ENCODE measurements at regions of chr3 and their contacts with region 1.

Region 1: DNA sequence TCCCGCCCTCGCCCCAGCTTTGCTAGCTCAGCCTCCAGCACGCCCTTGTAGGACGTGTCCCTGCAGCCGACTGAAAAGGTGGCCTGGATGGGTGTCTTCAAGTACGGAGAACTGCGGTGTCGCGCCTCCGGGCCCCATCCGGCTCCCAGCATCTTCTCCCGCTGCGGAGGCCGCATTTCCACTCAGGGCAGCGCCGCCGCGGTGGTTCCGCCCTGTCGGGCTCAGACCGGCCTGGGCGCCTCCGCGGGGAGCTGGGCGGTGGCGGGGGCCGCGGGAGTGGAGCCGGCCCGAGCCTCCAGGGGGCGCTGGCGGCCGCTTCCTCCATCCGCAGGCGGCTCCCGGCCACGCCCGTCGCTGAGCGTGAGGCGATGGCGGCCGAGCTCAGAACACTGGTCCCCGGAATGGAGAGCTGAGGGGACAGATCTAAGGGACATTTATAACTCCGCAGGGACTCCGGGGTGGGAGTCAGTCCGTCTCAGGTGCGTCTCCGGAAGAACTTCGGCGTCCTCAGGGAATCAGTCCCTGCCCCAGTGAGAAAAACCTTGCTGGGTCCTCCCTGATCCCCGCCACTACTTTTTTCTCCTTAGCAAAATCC is 13.6 kb upstream of the SMCO1 start:
- DNase-seq: peak; percentile 90
- H3K4me3 Mint-ChIP-seq: peak overlapping the region; percentile 73
- H3K27ac Mint-ChIP-seq: peak overlapping the region; percentile 85
- H3K4me1 Mint-ChIP-seq: peaks cover 22% of the 10 kb centered on the region
- H3K27me3 Mint-ChIP-seq: no peaks in the 10 kb centered on the region

Region 2: DNA sequence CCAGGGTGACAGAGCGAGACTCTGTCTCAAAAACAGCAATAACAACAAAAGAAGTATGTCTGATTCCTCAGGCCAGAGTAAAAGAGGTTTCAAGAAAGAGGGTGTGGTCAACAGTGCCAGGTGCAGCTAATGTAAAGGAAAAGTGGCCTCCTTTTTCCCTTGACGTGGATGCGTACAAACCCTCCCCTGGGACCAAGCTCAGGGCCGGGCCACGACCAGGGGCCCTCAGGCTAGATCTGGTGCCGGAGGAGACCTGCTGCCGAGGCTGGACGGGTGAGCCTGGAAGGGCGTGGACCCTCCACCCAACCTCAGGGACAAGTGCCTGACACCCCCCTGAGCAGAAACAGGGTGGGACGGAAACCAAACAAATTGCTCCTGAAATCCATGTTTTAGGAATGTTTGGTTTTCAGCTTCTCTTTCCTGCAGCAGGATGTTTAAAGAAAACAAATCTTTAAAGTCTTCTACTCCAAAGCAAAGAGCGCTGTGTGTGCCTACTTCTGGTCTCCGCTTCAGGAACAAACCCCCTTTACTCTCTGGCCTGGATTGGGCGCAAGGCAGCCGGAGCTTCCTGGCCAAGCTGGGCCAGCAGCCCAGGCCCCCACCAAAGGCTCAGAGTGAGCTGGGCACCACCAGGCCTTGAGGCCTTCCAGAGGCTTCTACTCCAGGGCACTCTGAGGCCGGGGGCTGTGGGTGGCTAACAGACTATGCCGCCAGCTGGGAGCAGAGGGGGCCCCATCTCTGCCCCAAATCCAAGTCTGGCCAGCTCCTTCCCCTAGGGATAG is 339.0 kb before region 1 on chr3:
- CTCF ChIA-PET with region 1: no interaction called
- POLR2A ChIA-PET with region 1: no interaction called
- DNase-seq: no peak
- H3K4me3 Mint-ChIP-seq: no peak overlapping the region
- H3K27ac Mint-ChIP-seq: no peak overlapping the region
- H3K4me1 Mint-ChIP-seq: peaks cover 52% of the 10 kb centered on the region
- H3K27me3 Mint-ChIP-seq: no peaks in the 10 kb centered on the region

Region 3: GRCh38 chr3:196317687-196318467 is 210.9 kb before region 1 on chr3 and contains the start of gene DYNLT2B:
- CTCF ChIA-PET with region 1: interaction called, 5 read pairs
- POLR2A ChIA-PET with region 1: interaction called, 20 read pairs
- DNase-seq: peak; percentile 93
- H3K4me3 Mint-ChIP-seq: peak within 1 kb of the TSS; percentile 93
- H3K27ac Mint-ChIP-seq: peak within 1 kb of the TSS; percentile 95
- H3K4me1 Mint-ChIP-seq: peaks cover 21% of the 10 kb centered on the region
- H3K27me3 Mint-ChIP-seq: no peaks in the 10 kb centered on the region
- total RNA-seq, gene DYNLT2B: 21.1 to 24.0 TPM

Region 4: GRCh38 chr3:196332168-196332567 is 196.6 kb before region 1 on chr3:
- CTCF ChIA-PET with region 1: no interaction called
- POLR2A ChIA-PET with region 1: no interaction called
- DNase-seq: no peak
- H3K4me3 Mint-ChIP-seq: no peak overlapping the region
- H3K27ac Mint-ChIP-seq: no peak overlapping the region
- H3K4me1 Mint-ChIP-seq: no peaks in the 10 kb centered on the region
- H3K27me3 Mint-ChIP-seq: peaks cover 12% of the 10 kb centered on the region

Region 5: DNA sequence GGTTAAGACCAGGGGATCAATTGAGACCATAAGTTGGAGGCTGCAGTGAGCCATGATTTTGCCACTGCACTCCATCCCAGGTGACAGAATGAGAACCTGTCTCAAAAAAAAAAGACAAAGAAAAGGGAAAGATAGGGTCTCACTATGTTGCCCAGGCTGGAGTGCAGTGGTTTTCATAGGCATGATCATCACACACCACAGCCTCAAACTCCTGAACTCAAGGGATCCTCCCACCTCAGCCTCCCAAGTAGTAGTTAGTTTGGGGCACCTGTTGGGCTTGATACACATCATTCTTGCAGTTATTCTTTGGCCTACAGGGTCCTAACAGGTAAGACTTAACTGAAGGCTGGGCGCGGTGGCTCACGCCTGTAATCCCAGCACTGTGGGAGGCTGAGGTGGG is 138.6 kb before region 1 on chr3:
- CTCF ChIA-PET with region 1: no interaction called
- POLR2A ChIA-PET with region 1: no interaction called
- DNase-seq: no peak
- H3K4me3 Mint-ChIP-seq: no peak overlapping the region
- H3K27ac Mint-ChIP-seq: no peak overlapping the region
- H3K4me1 Mint-ChIP-seq: no peaks in the 10 kb centered on the region
- H3K27me3 Mint-ChIP-seq: no peaks in the 10 kb centered on the region

Region 6: GRCh38 chr3:196513697-196514349 is 14.9 kb before region 1 on chr3:
- CTCF ChIA-PET with region 1: interaction called, 15 read pairs
- POLR2A ChIA-PET with region 1: interaction called, 5 read pairs
- DNase-seq: no peak
- H3K4me3 Mint-ChIP-seq: no peak overlapping the region
- H3K27ac Mint-ChIP-seq: no peak overlapping the region
- H3K4me1 Mint-ChIP-seq: peaks cover 10% of the 10 kb centered on the region
- H3K27me3 Mint-ChIP-seq: peaks cover 12% of the 10 kb centered on the region

Region 7: DNA sequence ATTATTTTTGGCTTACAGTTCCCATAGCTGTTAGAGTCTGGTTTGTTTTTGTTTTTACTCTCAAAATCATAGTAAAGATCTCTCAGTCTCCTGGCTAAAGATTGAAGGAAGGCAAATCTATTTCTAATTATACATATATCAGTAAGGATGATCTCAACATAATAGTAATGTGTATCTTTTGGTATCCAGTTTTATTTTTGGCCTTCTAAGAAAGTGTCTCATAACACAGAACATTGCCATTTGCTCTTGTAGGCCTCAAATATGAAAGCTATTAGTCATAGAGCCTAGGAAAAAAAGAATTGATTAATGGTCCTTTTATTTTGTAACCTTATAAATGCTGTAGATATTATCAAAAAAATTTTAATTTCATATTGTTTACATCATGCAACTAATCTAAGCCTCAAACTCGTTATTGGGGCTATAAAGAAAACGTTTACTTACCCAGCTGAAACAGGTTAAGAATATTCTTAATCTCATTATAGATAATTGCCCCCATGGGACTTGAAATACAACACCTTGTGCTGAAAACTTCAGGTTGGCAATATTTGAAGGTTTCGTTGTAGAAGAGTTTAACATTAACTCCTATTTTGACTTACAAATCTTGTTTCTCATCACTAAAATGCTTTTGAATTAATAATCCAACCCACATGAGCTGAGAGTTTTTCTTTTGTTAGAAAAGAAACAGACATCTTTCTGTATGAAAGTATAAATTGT is 56.5 kb after region 1 on chr3:
- CTCF ChIA-PET with region 1: interaction called, 12 read pairs
- POLR2A ChIA-PET with region 1: interaction called, 5 read pairs
- DNase-seq: no peak
- H3K4me3 Mint-ChIP-seq: no peak overlapping the region
- H3K27ac Mint-ChIP-seq: no peak overlapping the region
- H3K4me1 Mint-ChIP-seq: peaks cover 17% of the 10 kb centered on the region
- H3K27me3 Mint-ChIP-seq: no peaks in the 10 kb centered on the region

Region 8: GRCh38 chr3:196639483-196640296 is 111.0 kb after region 1 on chr3 and contains the start of gene NRROS:
- CTCF ChIA-PET with region 1: interaction called, 5 read pairs
- POLR2A ChIA-PET with region 1: interaction called, 12 read pairs
- DNase-seq: peak; percentile 82
- H3K4me3 Mint-ChIP-seq: peak within 1 kb of the TSS; percentile 73
- H3K27ac Mint-ChIP-seq: peak within 1 kb of the TSS; percentile 86
- H3K4me1 Mint-ChIP-seq: peaks cover 65% of the 10 kb centered on the region
- H3K27me3 Mint-ChIP-seq: no peaks in the 10 kb centered on the region
- total RNA-seq, gene NRROS: 50.1 to 52.8 TPM

Region 9: GRCh38 chr3:196942226-196942914 is 413.6 kb after region 1 on chr3 and contains the start of gene NCBP2:
- CTCF ChIA-PET with region 1: interaction called, 9 read pairs
- POLR2A ChIA-PET with region 1: interaction called, 13 read pairs
- DNase-seq: peak; percentile 100
- H3K4me3 Mint-ChIP-seq: peak within 1 kb of the TSS; percentile 90
- H3K27ac Mint-ChIP-seq: peak within 1 kb of the TSS; percentile 98
- H3K4me1 Mint-ChIP-seq: peaks cover 58% of the 10 kb centered on the region
- H3K27me3 Mint-ChIP-seq: no peaks in the 10 kb centered on the region
- total RNA-seq, gene NCBP2: 54.6 to 55.6 TPM